ENCODE measurements at regions of chr20 and their contacts with region 1.

Region 1: GRCh38 chr20:31661625-31662371 is 24.1 kb downstream of the COX4I2 start:
- DNase-seq: peak; percentile 87
- ATAC-seq: peak; percentile 96
- H3K4me3 ChIP-seq: peak overlapping the region; percentile 5 to 60 (median 52)
- H3K4me3 Mint-ChIP-seq: peak overlapping the region; percentile 69
- H3K27ac ChIP-seq: peak overlapping the region; percentile 29 to 48
- H3K27ac Mint-ChIP-seq: peak overlapping the region; percentile 85
- H3K4me1 ChIP-seq: peaks cover 7 to 17% of the 10 kb centered on the region in 2 donors
- H3K4me1 Mint-ChIP-seq: peaks cover 28% of the 10 kb centered on the region
- H3K27me3 ChIP-seq: no peaks in the 10 kb centered on the region
- H3K27me3 Mint-ChIP-seq: no peaks in the 10 kb centered on the region
- CTCF ChIP-seq: peak; percentile 80

Region 2: DNA sequence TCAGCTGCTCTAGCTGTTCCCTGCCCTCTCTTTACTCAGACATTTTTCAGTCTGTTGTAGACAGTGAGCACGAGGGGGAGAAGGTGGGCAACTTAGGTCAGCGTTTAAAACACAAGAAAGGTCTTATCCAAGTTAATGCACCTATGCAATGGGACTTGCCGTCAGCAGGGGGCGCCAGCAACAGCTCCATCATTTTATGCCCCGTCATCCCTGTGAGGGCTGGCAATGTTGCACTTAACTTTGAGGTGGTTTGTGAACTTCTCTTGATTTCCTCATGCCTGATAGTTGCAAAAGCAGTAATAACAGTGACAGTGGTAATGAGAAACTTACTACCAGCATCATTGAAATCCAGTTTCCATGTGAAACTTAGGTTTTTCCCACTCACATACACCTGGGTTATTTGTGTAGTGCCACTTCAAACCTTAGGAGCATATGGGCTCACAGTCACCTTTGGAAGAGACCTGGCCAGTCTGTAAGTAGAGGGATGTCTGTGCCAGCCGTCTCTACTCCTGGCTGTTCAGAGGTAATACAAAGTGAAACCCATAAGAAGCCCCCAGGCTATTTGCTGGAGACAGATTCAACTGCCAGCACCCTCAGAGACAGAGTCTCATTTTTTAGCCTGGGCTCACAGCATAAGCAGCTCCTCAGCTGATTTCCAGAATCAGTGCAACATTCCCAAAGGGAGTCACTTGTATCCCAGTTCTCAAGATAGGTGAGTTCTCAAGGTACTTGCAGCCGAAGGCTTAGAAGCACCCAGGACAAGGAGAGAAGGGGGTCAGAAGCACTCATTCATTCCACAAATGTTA is 101.5 kb before region 1 on chr20:
- CTCF ChIA-PET with region 1: interaction called, 15 read pairs
- POLR2A ChIA-PET with region 1: no interaction called
- intact Hi-C with region 1: no loop called
- DNase-seq: peak; percentile 75
- ATAC-seq: peak; percentile 65
- H3K4me3 ChIP-seq: no peak overlapping the region
- H3K4me3 Mint-ChIP-seq: no peak overlapping the region
- H3K27ac ChIP-seq: no peak overlapping the region
- H3K27ac Mint-ChIP-seq: no peak overlapping the region
- H3K4me1 ChIP-seq: no peaks in the 10 kb centered on the region
- H3K4me1 Mint-ChIP-seq: no peaks in the 10 kb centered on the region
- H3K27me3 ChIP-seq: no peaks in the 10 kb centered on the region
- H3K27me3 Mint-ChIP-seq: no peaks in the 10 kb centered on the region
- CTCF ChIP-seq: peak; percentile 89

Region 3: GRCh38 chr20:31630187-31630790 is 31.5 kb before region 1 on chr20:
- CTCF ChIA-PET with region 1: interaction called, 15 read pairs
- POLR2A ChIA-PET with region 1: interaction called, 3 read pairs
- intact Hi-C with region 1: no loop called
- DNase-seq: no peak
- ATAC-seq: no peak
- H3K4me3 ChIP-seq: no peak overlapping the region
- H3K4me3 Mint-ChIP-seq: no peak overlapping the region
- H3K27ac ChIP-seq: no peak overlapping the region
- H3K27ac Mint-ChIP-seq: no peak overlapping the region
- H3K4me1 ChIP-seq: no peaks in the 10 kb centered on the region
- H3K4me1 Mint-ChIP-seq: peaks cover 4% of the 10 kb centered on the region
- H3K27me3 ChIP-seq: no peaks in the 10 kb centered on the region
- H3K27me3 Mint-ChIP-seq: no peaks in the 10 kb centered on the region
- CTCF ChIP-seq: no peak

Region 4: DNA sequence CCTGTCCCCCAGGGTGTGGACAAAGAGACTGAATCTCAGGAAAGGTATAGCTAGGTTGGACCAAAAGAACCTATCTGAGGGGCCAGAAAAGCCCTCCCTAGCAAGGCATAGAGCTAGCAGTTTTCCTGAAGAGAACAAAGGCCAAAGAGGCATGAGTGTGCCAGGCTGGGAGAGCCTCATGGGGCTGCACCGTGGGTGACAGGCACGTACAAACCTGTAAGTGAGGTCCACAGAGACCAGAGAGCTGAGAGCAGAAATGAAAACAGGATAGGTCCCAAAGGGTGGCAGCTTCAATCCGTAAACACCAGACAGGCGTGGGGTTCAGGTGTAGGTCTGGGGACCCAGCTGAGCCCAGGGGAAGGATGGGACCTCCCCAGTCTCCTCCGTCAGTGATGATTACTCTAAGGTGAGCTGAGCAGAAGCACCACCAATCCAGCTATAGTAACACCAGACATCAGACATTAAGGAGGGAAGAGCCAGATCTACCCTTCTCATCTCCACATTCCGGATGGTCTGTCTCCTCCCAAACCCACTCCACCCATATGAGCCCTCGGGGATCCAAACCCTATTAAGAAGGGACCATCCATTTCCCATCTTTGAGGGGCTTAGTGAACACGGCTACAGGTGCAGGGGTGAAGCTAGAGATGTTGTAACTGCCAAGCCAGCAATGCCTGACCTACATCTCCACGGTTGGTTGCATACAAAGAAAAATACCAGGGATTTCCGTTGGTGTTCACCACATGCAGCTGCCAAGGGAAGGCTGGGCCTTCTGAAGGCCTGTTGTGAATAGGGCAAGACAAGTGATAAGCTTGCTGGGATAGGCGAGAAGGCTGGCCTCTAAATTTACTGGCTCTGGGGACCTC is 22.6 kb after region 1 on chr20:
- CTCF ChIA-PET with region 1: interaction called, 47 read pairs
- POLR2A ChIA-PET with region 1: interaction called, 4 read pairs
- intact Hi-C with region 1: no loop called
- DNase-seq: peak; percentile 56
- ATAC-seq: peak; percentile 76
- H3K4me3 ChIP-seq: peak overlapping the region in 2 of 5 experiments; percentile 4 to 56
- H3K4me3 Mint-ChIP-seq: peak overlapping the region; percentile 65
- H3K27ac ChIP-seq: peak overlapping the region; percentile 60 to 82
- H3K27ac Mint-ChIP-seq: peak overlapping the region; percentile 90
- H3K4me1 ChIP-seq: peaks cover 24 to 31% of the 10 kb centered on the region in 2 donors
- H3K4me1 Mint-ChIP-seq: peaks cover 40% of the 10 kb centered on the region
- H3K27me3 ChIP-seq: no peaks in the 10 kb centered on the region
- H3K27me3 Mint-ChIP-seq: no peaks in the 10 kb centered on the region
- CTCF ChIP-seq: no peak

Region 5: DNA sequence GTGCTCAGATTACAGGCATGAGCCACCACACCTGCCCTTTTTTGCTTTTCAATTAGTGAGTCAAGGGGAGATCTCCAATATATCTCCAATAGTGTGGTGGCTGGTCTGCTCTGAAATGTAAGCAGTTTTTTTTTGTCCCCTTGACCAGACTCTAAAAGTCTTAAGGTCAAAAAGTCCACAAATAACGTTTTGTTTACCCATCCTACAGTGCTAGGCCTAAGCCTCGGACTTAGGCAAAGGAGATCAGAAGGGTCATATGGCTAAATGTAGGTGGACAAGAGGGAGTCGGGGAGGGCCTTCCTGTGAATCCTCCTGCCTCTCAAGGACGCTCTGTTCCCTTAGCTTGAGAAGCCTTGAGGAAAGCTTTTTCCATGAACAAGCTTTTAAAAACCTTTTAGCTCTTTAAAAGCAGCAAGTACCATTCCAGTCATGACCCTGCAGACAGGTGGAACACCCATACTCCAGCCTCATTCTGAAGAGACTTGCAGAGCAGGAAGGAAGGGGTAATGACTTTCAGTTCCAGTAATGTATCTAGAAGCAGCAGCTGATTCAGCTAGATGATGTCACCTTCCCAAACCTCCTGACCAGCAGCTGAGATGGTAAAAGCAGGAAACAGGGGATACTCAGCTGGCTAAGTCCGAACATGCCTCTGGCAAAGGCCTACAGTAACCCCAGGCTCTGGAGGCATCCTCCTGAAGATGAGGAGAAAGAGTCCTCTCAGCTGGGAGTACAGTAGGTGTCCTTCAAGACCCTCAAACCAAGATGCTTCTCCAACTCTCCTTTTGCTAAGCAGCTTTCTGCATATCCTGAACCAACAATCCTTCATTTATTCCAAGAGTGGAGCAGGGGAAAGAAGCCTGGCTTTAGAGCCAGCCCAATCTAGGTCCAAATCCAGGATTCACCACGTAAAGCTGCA is 37.3 kb after region 1 on chr20:
- CTCF ChIA-PET with region 1: interaction called, 18 read pairs
- POLR2A ChIA-PET with region 1: no interaction called
- intact Hi-C with region 1: no loop called
- DNase-seq: peak; percentile 36
- ATAC-seq: peak; percentile 53
- H3K4me3 ChIP-seq: no peak overlapping the region
- H3K4me3 Mint-ChIP-seq: peak overlapping the region; percentile 7
- H3K27ac ChIP-seq: peak overlapping the region; percentile 9 to 22
- H3K27ac Mint-ChIP-seq: no peak overlapping the region
- H3K4me1 ChIP-seq: peaks cover 10 to 13% of the 10 kb centered on the region in 2 donors
- H3K4me1 Mint-ChIP-seq: peaks cover 30% of the 10 kb centered on the region
- H3K27me3 ChIP-seq: no peaks in the 10 kb centered on the region
- H3K27me3 Mint-ChIP-seq: no peaks in the 10 kb centered on the region
- CTCF ChIP-seq: no peak

Region 6: DNA sequence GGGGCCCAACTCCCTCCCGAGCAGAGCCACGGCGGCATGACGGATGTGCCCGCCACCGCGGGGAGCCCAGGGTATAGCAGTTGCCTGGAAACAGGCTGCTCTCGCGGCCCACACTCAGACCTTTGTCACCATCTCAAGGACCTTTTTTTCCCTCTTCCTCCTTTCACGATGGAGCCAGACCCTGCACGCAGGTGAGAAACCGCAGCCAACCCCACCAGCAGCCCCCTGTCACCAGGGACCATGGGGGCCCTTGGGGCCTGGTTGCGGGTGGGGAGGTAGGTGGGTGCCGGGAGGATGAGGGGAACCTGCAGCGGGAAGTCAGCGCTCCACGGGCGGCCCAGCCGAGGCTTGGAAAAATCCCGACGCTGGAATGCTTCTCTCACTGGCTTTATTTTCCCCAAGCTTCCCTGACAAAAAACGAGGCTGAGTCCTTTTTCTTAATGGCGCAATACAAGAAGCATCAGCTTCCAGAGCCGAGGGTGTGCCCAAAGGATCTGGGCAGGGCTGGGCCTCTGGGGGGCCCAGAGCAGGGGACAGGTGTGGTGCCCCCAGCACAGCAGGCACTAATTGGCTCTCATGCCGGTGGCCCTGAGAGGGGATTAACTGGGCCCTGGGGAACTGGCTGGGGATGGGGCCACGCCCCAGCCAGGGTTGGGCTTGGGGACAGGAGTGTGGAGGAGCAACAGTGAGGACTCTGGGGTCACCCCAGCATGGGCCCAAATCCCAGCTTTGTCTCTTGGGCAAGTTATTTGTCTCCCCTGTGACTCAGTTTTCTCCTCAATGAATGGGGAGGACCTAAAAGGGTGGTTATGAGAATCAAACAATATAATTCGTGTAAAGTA is 899.4 kb after region 1 on chr20:
- CTCF ChIA-PET with region 1: no interaction called
- POLR2A ChIA-PET with region 1: no interaction called
- intact Hi-C with region 1: no loop called
- DNase-seq: no peak
- ATAC-seq: peak; percentile 21
- H3K4me3 ChIP-seq: no peak overlapping the region
- H3K4me3 Mint-ChIP-seq: no peak overlapping the region
- H3K27ac ChIP-seq: no peak overlapping the region
- H3K27ac Mint-ChIP-seq: no peak overlapping the region
- H3K4me1 ChIP-seq: peaks cover 4 to 7% of the 10 kb centered on the region in 2 donors
- H3K4me1 Mint-ChIP-seq: peaks cover 8% of the 10 kb centered on the region
- H3K27me3 ChIP-seq: peaks cover 0 to 37% (median under 1%) of the 10 kb centered on the region in 4 experiments
- H3K27me3 Mint-ChIP-seq: peaks cover 10% of the 10 kb centered on the region
- CTCF ChIP-seq: no peak